GM18951 (cell line): ENCODE measurements at regions of chr10 and their contacts with region 1.

Region 1: GRCh38 chr10:72331601-72332422 is 22.9 kb downstream of the DNAJB12 start:
- POLR2A ChIP-seq: peak; percentile 44

Region 2: DNA sequence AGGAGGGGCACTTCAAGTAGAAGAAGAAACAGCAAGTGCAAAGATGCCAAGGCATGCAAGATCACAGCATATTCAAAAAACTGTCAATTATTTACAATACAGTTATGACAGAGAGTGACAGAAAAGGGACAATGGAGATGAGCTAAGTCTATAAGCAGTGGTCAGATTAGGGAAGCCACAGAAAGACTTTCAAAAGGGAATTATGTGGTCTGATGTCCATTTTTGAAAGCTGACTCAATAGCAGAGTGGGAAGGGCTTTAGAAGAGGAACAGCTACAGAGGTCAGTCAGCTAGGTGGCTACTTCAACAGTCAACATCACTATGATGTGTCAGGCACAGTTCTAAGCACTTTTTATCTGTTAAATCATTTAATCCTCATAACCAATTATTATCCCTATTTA is 198.3 kb before region 1 on chr10:
- in situ Hi-C with region 1: loop called (anchors 10 kb)
- POLR2A ChIP-seq: no peak

Region 3: GRCh38 chr10:72215652-72216549 is 115.9 kb before region 1 on chr10 and contains the starts of genes ANAPC16 and ASCC1:
- in situ Hi-C with region 1: loop called (anchors 10 kb)
- POLR2A ChIP-seq: peak; percentile 99